GM12878 (cell line): ENCODE measurements at regions of chr17 and their contacts with region 1.

Region 1: DNA sequence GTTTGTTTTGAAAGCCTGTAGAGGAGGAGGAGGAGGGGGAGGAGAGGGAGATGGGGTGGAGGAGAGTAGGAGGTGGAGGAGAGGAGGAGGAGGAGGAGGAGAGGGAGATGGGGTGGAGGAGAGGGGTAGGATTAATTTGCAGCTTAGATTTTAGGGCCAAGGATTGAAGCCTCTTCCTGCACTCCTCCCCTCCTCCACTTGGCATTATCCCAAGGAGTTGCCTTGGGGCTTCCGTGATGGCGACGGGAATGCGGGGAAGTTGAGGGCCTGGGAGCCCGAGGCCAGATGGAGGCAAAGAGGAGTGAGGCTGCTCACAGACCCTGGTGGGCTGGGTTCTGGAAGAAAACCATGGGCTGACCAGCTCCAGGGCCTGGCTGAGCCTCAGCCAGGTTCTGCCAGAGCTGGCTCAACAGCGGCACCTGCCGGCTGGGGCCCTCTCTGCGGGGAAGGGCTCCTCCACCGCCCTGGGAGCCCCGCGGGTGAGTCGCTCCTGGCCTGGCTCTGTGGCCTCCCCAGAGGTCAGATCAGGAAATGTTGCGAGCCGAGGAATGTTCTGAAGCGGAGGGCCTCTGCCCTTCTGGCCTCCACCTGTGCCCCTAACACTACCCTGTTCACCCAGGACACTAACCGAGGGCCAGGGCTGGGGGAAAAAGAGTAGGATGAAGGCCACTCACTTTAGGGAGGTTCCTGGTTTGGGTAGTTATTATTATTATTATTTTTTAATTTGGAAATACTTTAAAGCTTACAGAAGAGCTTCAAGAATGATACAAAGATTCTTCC is 23.9 kb upstream of the FMNL1 start:
- DNase-seq: peak; percentile 54
- ATAC-seq: peak; percentile 100
- H3K4me3 ChIP-seq: no peak overlapping the region
- H3K27ac ChIP-seq: no peak overlapping the region
- H3K4me1 ChIP-seq: peaks cover 8% of the 10 kb centered on the region
- H3K27me3 ChIP-seq: no peaks in the 10 kb centered on the region
- CTCF ChIP-seq: peak; percentile 99 to 100 (median 99)
- EP300 ChIP-seq: no peak
- POLR2A ChIP-seq: no peak
- RAD21 ChIP-seq: peak; percentile 97

Region 2: DNA sequence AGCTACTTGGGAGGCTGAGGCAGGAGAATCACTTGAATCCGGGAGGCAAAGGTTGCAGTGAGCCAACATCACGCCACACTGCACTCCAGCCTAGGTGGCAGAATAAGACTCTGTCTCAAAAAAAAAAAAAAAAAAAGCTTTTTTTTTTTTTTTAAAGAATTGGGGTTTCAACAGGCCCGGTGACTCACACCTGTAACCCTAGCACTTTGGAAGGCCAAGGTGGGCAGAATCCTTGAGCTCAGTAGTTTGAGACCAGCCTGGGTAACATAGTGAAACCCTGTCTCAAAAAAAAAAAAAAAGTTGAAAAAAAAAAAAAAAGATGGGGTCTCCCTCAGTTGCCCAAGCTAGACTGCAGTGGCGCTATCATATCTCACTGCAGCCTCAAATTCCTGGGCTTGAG is 42.7 kb before region 1 on chr17:
- CTCF ChIA-PET with region 1: interaction called, 189 read pairs
- POLR2A ChIA-PET with region 1: interaction called, 24 read pairs
- RAD21 ChIA-PET with region 1: interaction called, 76 read pairs
- SMC1A ChIA-PET with region 1: interaction called, 44 read pairs
- in situ Hi-C with region 1: no loop called
- intact Hi-C with region 1: no loop called
- DNase-seq: no peak
- ATAC-seq: no peak
- H3K4me3 ChIP-seq: no peak overlapping the region
- H3K27ac ChIP-seq: no peak overlapping the region
- H3K4me1 ChIP-seq: peaks cover 5% of the 10 kb centered on the region
- H3K27me3 ChIP-seq: no peaks in the 10 kb centered on the region
- CTCF ChIP-seq: no peak
- EP300 ChIP-seq: no peak
- POLR2A ChIP-seq: no peak
- RAD21 ChIP-seq: no peak

Region 3: DNA sequence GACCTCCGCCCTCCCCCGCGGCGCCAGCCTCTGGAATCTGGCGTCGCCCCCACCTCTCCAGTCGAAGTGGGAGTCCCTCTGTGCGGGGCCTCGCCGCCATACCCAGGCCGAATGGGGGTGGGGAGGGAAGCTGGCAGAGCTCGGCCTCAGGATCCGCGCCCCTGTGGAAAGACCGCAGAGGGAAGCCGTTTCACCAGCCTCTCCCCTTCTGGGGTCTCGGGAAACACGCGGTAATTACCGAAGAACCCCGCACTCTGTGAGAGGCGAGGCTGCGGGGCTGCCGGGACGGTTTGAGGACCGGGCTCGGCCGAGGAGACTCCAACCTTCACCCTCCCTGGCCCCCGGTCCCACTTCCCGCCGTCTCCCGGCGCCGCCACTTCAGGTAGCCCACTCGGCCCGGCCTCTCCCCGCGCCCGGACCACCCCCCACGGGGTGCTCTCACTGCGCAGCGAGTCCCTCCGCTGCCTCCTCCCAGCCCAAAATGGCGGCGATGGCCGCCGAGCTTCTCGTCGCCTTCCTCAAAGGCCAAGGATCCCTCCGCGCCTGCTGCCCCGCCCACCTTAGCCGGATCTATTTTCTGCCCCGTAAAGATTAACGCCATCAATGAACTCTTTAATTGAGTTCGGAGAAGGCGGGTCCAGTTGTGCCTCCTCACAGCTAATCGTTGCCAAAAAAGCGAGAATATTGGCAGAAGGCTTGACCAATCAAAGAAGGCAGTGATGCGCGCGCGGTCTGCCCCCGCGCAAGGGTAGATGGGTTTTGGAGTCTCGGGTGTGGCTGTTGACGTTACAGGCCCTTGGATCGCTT is 36.5 kb before region 1 on chr17:
- CTCF ChIA-PET with region 1: interaction called, 189 read pairs
- POLR2A ChIA-PET with region 1: no interaction called
- RAD21 ChIA-PET with region 1: interaction called, 5 read pairs
- SMC1A ChIA-PET with region 1: interaction called, 10 read pairs
- in situ Hi-C with region 1: no loop called
- intact Hi-C with region 1: no loop called
- DNase-seq: peak; percentile 100
- ATAC-seq: peak; percentile 96
- H3K4me3 ChIP-seq: peak overlapping the region; percentile 86
- H3K27ac ChIP-seq: peak overlapping the region; percentile 98
- H3K4me1 ChIP-seq: peaks cover 8% of the 10 kb centered on the region
- H3K27me3 ChIP-seq: no peaks in the 10 kb centered on the region
- CTCF ChIP-seq: no peak
- EP300 ChIP-seq: peak in 1 of 2 experiments; percentile 69; a peak in 2 of 4 replicates
- POLR2A ChIP-seq: peak; percentile 95
- RAD21 ChIP-seq: no peak

Region 4: GRCh38 chr17:45172454-45173286 is 25.1 kb before region 1 on chr17:
- CTCF ChIA-PET with region 1: interaction called, 17 read pairs
- POLR2A ChIA-PET with region 1: interaction called, 4 read pairs
- RAD21 ChIA-PET with region 1: interaction called, 5 read pairs
- SMC1A ChIA-PET with region 1: interaction called, 3 read pairs
- in situ Hi-C with region 1: no loop called
- intact Hi-C with region 1: no loop called
- DNase-seq: no peak
- ATAC-seq: peak; percentile 93
- H3K4me3 ChIP-seq: peak overlapping the region; percentile 23
- H3K27ac ChIP-seq: peak overlapping the region; percentile 64
- H3K4me1 ChIP-seq: peaks cover 7% of the 10 kb centered on the region; the same call in 1 of the 2 replicates
- H3K27me3 ChIP-seq: no peaks in the 10 kb centered on the region
- CTCF ChIP-seq: no peak
- EP300 ChIP-seq: no peak
- POLR2A ChIP-seq: 0 out of 2 replicates have a peak, but pooled peaks have one; percentile 26
- RAD21 ChIP-seq: no peak

Region 5: DNA sequence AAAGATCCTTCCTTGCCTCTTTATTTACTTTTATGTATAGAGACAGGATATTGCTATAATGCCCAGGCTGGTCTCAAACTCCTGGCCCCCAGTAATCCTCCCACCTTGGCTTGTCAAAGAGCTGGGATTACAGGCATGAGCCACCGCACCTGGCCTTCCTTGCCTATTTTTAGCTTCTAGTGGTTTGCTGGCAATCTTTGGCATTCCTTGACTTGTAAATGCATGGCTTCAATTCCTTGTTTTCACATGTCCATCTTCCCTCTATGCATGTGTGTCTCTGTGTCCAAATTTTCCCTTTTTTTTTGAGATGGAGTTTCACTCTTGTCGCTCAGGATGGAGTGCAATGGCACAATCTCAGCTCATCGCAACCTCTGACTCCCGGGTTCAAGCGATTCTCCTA is 13.6 kb before region 1 on chr17:
- CTCF ChIA-PET with region 1: interaction called, 29 read pairs
- POLR2A ChIA-PET with region 1: interaction called, 3 read pairs
- RAD21 ChIA-PET with region 1: interaction called, 3 read pairs
- SMC1A ChIA-PET with region 1: interaction called, 4 read pairs
- in situ Hi-C with region 1: no loop called
- intact Hi-C with region 1: no loop called
- DNase-seq: no peak
- ATAC-seq: no peak
- H3K4me3 ChIP-seq: no peak overlapping the region
- H3K27ac ChIP-seq: no peak overlapping the region
- H3K4me1 ChIP-seq: no peaks in the 10 kb centered on the region
- H3K27me3 ChIP-seq: no peaks in the 10 kb centered on the region
- CTCF ChIP-seq: no peak
- EP300 ChIP-seq: no peak
- POLR2A ChIP-seq: no peak
- RAD21 ChIP-seq: no peak